ENCODE measurements at regions of chr12 and their contacts with region 1.

Region 1: GRCh38 chr12:4648501-4649357 is at the starts of genes AKAP3 and NDUFA9:
- DNase-seq: peak; percentile 77
- H3K4me3 Mint-ChIP-seq: peak within 1 kb of the TSS; percentile 98
- H3K27ac Mint-ChIP-seq: peak within 1 kb of the TSS; percentile 91
- H3K4me1 Mint-ChIP-seq: peaks cover 44% of the 10 kb centered on the region
- H3K27me3 Mint-ChIP-seq: peaks cover 8% of the 10 kb centered on the region
- total RNA-seq, gene AKAP3: 0.65 and 1.1 TPM in 2 replicates
- total RNA-seq, gene NDUFA9: 118 and 123 TPM in 2 replicates

Region 2: GRCh38 chr12:3313675-3314663 is 1334.8 kb before region 1 on chr12:
- intact Hi-C with region 1: no loop called
- DNase-seq: no peak
- H3K4me3 Mint-ChIP-seq: no peak overlapping the region
- H3K27ac Mint-ChIP-seq: no peak overlapping the region
- H3K4me1 Mint-ChIP-seq: no peaks in the 10 kb centered on the region
- H3K27me3 Mint-ChIP-seq: peaks cover 2% of the 10 kb centered on the region

Region 3: GRCh38 chr12:4320853-4321701 is 327.7 kb before region 1 on chr12 and contains the start of gene TIGAR:
- intact Hi-C with region 1: loop called (anchors 5 kb)
- DNase-seq: peak; percentile 93
- H3K4me3 Mint-ChIP-seq: peak within 1 kb of the TSS; percentile 93
- H3K27ac Mint-ChIP-seq: peak within 1 kb of the TSS; percentile 93
- H3K4me1 Mint-ChIP-seq: peaks cover 45% of the 10 kb centered on the region
- H3K27me3 Mint-ChIP-seq: no peaks in the 10 kb centered on the region
- total RNA-seq, gene TIGAR: 14.4 TPM in 2 replicates

Region 4: DNA sequence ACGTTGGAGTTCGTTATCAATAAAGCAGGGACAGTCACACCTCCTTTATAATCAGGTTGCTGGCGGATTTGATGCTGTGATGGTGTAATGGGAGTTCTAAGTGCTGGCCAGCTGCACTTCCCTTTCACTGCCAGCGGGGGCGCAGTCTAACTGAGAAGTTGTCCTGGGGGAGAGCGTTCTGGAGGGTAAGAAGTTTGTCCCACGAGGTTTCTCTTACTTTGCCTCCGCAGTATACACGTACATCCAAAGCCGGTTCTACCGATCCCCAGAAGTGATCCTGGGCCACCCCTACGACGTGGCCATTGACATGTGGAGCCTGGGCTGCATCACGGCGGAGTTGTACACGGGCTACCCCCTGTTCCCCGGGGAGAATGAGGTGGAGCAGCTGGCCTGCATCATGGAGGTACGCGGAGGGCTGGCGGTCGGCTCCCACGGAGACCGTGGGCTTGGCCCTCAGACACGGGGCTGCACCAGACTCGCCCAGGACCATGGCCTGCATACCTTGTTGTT is 44.0 kb before region 1 on chr12:
- intact Hi-C with region 1: loop called (anchors 1 kb)
- DNase-seq: peak; percentile 67
- H3K4me3 Mint-ChIP-seq: peak overlapping the region; percentile 96
- H3K27ac Mint-ChIP-seq: peak overlapping the region; percentile 88
- H3K4me1 Mint-ChIP-seq: peaks cover 18% of the 10 kb centered on the region
- H3K27me3 Mint-ChIP-seq: peaks cover 25% of the 10 kb centered on the region

Region 5: GRCh38 chr12:4829161-4829792 is 180.5 kb after region 1 on chr12:
- intact Hi-C with region 1: loop called (anchors 1 kb)
- DNase-seq: no peak
- H3K4me3 Mint-ChIP-seq: peak overlapping the region; percentile 83
- H3K27ac Mint-ChIP-seq: peak overlapping the region; percentile 99
- H3K4me1 Mint-ChIP-seq: peaks cover 71% of the 10 kb centered on the region
- H3K27me3 Mint-ChIP-seq: no peaks in the 10 kb centered on the region